Mucosa of descending colon (tissue), 3 donors: ENCODE measurements at regions of chr9 and their contacts with region 1.

Region 1: GRCh38 chr9:35732122-35732799 is at the starts of genes CREB3 and TLN1:
- DNase-seq: peak; percentile 97 to 99 (median 99)
- ATAC-seq: peak; percentile 88
- H3K4me3 ChIP-seq: peak within 1 kb of the TSS; percentile 52
- H3K4me1 ChIP-seq: peaks cover 49% of the 10 kb centered on the region
- CTCF ChIP-seq: peak; percentile 16
- total RNA-seq, gene CREB3: 28.2 to 47.7 (median 34.3) TPM
- total RNA-seq, gene TLN1: 154 to 720 (median 189) TPM

Region 2: DNA sequence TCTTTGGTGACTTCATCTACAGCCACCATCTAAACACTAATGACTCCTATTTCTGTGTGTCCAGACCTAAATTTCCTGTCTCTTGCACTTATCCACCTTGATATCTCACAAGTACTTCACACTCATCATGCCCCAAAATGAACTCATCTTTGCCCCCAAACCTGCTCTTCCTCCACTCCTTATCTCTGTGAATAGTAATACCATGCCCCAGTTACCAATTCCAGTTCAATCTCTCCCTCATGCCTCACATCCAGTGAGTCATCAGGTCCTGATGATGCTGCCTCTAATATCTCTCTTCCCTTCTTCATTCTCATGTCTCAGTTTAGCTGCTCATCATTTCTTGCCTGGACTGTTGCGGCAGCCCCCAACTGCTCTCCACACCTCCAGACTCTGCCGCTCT is 757.6 kb before region 1 on chr9:
- intact Hi-C with region 1: no loop called
- DNase-seq: no peak
- ATAC-seq: no peak
- H3K4me3 ChIP-seq: no peak overlapping the region
- H3K4me1 ChIP-seq: no peaks in the 10 kb centered on the region
- CTCF ChIP-seq: no peak

Region 3: GRCh38 chr9:35657546-35658136 is 74.6 kb before region 1 on chr9 and contains the start of gene RMRP:
- intact Hi-C with region 1: loop called in 1 of 2 experiments (anchors 5 kb)
- DNase-seq: peak; percentile 95 to 98 (median 95)
- ATAC-seq: peak; percentile 89
- H3K4me3 ChIP-seq: peak within 1 kb of the TSS; percentile 73
- H3K4me1 ChIP-seq: peaks cover 59% of the 10 kb centered on the region
- CTCF ChIP-seq: peak; percentile 31
- total RNA-seq, gene RMRP: 9,213 to 30,268 (median 19,463) TPM

Region 4: DNA sequence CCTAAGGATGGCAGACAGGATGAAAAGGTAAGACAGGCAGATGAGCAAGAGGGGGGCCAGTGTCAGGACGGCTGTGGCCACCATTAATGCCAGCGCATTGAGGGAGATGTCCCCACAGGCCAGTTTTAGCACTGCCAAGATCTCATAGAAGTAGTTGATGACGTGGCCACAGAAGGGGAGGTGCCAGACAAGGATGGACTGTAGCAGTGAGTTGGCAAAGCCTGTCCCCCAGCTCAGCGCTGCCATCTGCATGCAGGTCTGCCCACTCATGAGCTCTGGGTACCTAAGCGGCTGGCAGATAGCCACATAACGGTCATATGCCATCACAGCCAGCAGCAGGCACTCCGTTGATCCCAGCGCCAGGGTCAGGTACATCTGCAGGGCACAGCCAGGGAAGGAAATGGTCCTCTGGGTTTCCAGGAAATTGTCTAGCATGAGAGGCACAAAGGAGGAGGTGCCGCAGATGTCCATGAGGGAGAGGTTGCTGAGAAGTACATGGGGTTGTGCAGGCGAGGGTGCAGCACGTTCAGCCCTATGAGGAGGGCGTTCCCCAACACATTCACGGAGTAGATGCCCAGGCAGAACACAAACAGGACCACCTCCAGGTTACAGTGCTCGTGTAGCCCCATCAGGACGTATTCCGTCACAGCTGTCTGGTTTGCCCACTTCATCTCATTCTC is 127.2 kb after region 1 on chr9:
- intact Hi-C with region 1: no loop called
- DNase-seq: no peak
- ATAC-seq: peak; percentile 33
- H3K4me3 ChIP-seq: no peak overlapping the region
- H3K4me1 ChIP-seq: no peaks in the 10 kb centered on the region
- CTCF ChIP-seq: no peak

Region 5: GRCh38 chr9:36204906-36205547 is 472.8 kb after region 1 on chr9:
- intact Hi-C with region 1: no loop called
- DNase-seq: no peak
- ATAC-seq: peak; percentile 64
- H3K4me3 ChIP-seq: no peak overlapping the region
- H3K4me1 ChIP-seq: no peaks in the 10 kb centered on the region
- CTCF ChIP-seq: no peak